Activated naive CD4-positive, alpha-beta T cell treated with anti-CD3 and anti-CD28 coated beads for 36 hours (primary cell): ENCODE measurements at regions of chr4 and their contacts with region 1.

Region 1: DNA sequence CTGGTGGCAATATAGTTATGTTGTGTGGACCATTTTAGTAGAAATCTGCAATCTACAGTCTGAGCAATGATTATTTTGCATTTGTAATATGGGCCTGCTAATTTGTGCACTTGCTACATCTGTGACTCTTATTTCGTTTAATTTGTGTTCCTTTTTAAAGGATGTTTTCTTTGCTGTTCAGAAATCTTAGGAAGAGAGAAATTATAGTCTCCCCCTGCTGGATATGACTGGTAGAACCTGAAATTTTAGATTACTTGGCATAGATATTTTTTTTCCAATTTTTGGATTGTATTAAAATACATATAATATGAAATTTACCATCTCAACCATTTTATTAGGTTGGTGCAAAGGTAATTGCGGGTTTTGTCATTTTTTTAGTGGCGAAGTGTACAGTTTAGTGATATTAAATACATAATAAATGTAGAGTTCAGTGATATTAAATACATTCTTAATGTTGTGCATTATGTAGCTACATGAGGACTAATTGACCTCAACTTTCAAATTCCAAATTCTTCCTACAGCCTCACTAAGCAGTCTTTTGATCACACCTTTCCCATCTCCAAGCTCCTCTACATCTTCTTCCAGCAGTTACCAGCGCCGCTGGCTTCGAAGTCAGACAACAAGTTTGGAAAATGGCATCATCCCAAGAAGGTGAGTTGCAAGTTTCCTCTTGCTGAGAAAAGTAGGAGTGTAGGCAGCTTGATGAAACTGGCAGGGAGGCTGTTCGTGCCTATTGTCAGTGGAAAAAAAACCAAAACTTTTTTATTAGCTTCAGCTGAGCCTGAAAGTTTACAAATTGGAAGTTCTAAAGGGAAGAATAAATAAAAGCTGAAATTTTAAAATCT is 82.2 kb downstream of the FNIP2 start:
- DNase-seq: no peak
- H3K4me3 Mint-ChIP-seq: no peak overlapping the region
- H3K27ac Mint-ChIP-seq: no peak overlapping the region
- H3K4me1 Mint-ChIP-seq: peaks cover 9% of the 10 kb centered on the region
- H3K27me3 Mint-ChIP-seq: no peaks in the 10 kb centered on the region

Region 2: GRCh38 chr4:158253350-158253980 is 597.6 kb before region 1 on chr4:
- CTCF ChIA-PET with region 1: interaction called, 3 read pairs
- intact Hi-C with region 1: loop called (anchors 2 kb)
- DNase-seq: peak; percentile 76
- H3K4me3 Mint-ChIP-seq: no peak overlapping the region
- H3K27ac Mint-ChIP-seq: no peak overlapping the region
- H3K4me1 Mint-ChIP-seq: peaks cover 7% of the 10 kb centered on the region
- H3K27me3 Mint-ChIP-seq: peaks cover 18% of the 10 kb centered on the region

Region 3: GRCh38 chr4:158496030-158496741 is 354.8 kb before region 1 on chr4:
- CTCF ChIA-PET with region 1: no interaction called
- intact Hi-C with region 1: loop called (anchors 2 kb)
- DNase-seq: peak; percentile 71
- H3K4me3 Mint-ChIP-seq: no peak overlapping the region
- H3K27ac Mint-ChIP-seq: no peak overlapping the region
- H3K4me1 Mint-ChIP-seq: no peaks in the 10 kb centered on the region
- H3K27me3 Mint-ChIP-seq: peaks cover 11% of the 10 kb centered on the region

Region 4: DNA sequence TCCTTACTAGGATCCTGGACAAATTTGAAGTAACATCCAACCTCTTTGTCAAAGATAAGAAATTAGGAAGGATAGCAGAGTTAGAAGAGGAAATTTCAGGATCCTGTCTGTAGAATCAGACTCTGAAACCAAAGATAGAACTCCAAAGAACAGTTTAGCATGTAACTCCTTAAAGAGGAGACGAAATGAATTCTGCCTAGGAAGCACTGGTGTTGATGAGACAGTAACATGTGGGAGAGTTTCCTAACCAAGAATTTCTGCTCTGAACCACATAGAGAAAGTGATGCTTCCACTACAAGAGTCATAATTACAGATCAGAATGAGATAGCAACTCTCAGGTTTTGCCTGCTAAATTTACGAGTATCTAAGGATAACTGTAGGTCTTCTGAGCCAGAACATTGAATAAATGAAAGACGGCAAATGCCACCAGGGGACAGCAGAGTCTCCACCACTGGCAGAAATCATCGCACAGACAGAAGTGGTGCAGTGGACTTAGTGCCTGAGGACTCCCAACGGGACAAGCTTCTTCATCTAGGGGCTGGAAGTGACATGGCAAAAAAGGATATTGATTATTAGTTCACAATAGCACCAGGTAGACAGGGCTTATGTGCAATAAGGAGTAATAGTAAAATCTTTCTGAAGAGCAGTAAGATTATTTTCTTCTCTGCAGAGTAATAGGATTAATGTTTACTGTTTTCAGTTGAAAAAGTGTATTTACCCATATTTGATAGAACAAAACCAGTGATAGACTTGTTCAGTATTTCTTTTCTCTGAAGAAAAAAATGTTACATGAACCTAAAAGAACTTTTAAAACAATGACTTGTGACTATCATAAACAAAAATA is 121.1 kb before region 1 on chr4:
- CTCF ChIA-PET with region 1: interaction called, 11 read pairs
- intact Hi-C with region 1: loop called (anchors 1 kb)
- DNase-seq: peak; percentile 73
- H3K4me3 Mint-ChIP-seq: no peak overlapping the region
- H3K27ac Mint-ChIP-seq: no peak overlapping the region
- H3K4me1 Mint-ChIP-seq: peaks cover 4% of the 10 kb centered on the region
- H3K27me3 Mint-ChIP-seq: peaks cover 26% of the 10 kb centered on the region

Region 5: DNA sequence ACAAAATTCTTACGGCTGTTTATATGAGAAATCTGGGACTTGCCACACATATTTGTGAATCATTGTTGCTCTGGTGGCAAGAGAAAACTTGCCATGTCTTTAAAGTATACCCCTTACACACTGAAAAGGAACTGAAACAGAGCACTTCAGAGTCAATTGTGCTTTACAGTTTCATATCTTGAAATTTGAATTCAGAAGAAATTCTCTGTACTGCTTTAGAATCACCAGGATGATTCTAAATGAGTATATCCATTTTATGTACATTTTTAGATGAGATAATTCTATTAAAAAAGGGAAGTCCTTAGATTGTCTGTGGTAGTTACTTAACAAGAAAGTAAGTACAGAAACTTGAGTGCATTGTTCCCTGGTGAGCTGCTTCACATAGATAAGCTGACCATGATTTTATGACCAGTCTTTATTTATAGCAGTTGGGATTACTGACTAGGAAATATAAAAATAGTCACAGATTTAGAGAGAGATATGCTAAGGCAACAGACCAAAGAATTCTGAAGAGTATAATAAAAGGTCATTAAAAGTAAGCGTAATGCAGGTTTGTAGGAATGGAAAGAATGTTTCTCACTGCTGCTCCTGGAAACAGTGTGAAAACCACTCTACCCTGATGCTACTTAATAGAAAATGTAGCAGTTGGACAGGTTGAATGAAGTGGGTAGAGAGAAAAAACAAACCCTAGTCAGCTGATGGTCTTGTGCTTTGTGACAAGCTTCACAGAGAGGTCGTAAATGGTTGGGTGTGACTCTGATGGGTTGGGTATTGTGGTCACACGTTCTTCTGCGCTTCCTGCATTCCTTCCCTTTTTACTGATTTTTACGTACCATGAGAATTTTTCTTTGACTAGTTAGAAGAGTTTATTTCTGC is 41.2 kb before region 1 on chr4:
- CTCF ChIA-PET with region 1: interaction called, 3 read pairs
- intact Hi-C with region 1: loop called (anchors 2 kb)
- DNase-seq: peak; percentile 18
- H3K4me3 Mint-ChIP-seq: peak overlapping the region; percentile 46
- H3K27ac Mint-ChIP-seq: peak overlapping the region; percentile 42
- H3K4me1 Mint-ChIP-seq: peaks cover 40% of the 10 kb centered on the region
- H3K27me3 Mint-ChIP-seq: no peaks in the 10 kb centered on the region